Lower leg skin (tissue), 4 donors: ENCODE measurements at regions of chr9 and their contacts with region 1.

Region 1: DNA sequence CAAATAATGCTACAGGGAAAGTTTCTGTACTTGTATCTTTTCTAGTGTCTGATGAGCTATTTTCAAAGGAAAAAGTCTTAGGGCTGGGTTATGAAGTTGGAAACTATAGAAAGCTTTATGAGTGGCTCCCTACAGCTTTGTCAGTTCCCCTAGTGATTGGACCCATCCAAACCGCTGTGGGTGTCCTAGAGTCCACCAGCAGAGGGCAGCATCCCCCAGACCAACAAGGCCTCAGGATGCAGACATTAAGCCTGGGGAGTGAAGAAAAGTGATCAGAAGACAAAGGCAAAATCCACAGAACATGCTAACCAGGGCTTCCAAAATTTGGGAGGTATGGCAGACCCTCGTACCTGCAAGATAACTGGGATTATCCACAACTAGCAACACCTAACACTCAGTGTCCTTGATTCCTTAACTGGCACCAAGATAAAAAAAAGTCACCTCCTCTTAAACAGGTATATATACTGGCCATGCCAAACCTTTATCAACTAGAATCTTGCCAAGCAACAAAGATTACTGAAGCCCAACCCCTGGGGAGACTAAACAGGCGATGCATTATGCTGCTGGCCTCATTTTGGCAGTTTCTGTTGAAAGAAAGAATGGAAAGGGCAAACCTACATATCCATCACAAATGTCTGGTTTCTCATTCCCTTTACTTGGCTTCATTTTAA is 110.4 kb upstream of the NR5A1 start:
- DNase-seq: peak; percentile 72 to 94
- H3K4me3 ChIP-seq: no peak overlapping the region
- CTCF ChIP-seq: no peak
- POLR2A ChIP-seq: no peak

Region 2: GRCh38 chr9:124054582-124055227 is 562.9 kb before region 1 on chr9:
- intact Hi-C with region 1: no loop called
- DNase-seq: no peak
- H3K4me3 ChIP-seq: no peak overlapping the region
- CTCF ChIP-seq: no peak
- POLR2A ChIP-seq: no peak

Region 3: GRCh38 chr9:124710766-124711165 is 93.2 kb after region 1 on chr9:
- intact Hi-C with region 1: loop called (anchors 5 kb)
- DNase-seq: no peak
- H3K4me3 ChIP-seq: no peak overlapping the region
- CTCF ChIP-seq: no peak
- POLR2A ChIP-seq: no peak